ENCODE measurements at regions of chr3 and their contacts with region 1.

Region 1: GRCh38 chr3:170357176-170357919 is at the start of gene SKIL:
- DNase-seq: peak; percentile 94
- ATAC-seq: peak; percentile 76
- H3K4me3 ChIP-seq: peak within 1 kb of the TSS; percentile 85
- H3K27ac ChIP-seq: peak within 1 kb of the TSS; percentile 65
- H3K4me1 ChIP-seq: peaks cover 38% of the 10 kb centered on the region
- H3K27me3 ChIP-seq: no peaks in the 10 kb centered on the region
- CTCF ChIP-seq: no peak
- total RNA-seq, gene SKIL: 15.6 and 35.0 TPM in 2 replicates

Region 2: DNA sequence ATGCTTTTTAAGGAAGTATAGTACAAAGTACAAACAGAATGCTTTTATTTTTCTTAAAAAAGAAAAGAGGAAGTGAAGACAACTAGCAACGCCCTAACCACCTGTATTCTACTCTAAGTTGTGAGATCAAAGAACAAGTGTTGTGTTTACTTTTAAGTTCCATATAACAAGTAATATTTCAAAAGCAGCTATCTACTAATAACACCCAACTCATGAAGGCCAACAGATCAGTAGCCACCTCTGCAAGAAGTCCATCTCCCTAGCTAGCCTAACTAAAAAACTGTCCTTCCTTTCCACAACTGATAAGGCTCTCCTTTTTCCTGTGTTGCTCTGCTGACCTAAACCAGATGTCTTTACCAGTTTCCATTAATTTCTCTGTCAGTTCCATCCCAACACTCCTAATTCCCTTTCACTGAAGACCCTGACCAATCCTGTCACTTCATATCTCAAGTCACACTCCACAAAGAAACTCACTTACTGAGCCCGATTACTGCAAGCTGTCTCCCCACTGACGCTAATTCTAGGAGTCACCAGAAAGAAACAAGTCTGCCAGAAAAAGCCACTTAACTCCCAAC is 202.7 kb before region 1 on chr3:
- CTCF ChIA-PET with region 1: no interaction called
- POLR2A ChIA-PET with region 1: interaction called, 10 read pairs
- intact Hi-C with region 1: no loop called
- DNase-seq: no peak
- ATAC-seq: peak; percentile 15
- H3K4me3 ChIP-seq: no peak overlapping the region
- H3K27ac ChIP-seq: no peak overlapping the region
- H3K4me1 ChIP-seq: 0 out of 2 replicates have a peak, but pooled peaks cover 5% of the 10 kb centered on the region
- H3K27me3 ChIP-seq: no peaks in the 10 kb centered on the region
- CTCF ChIP-seq: no peak

Region 3: GRCh38 chr3:170189398-170190256 is 167.7 kb before region 1 on chr3:
- CTCF ChIA-PET with region 1: interaction called, 4 read pairs
- POLR2A ChIA-PET with region 1: no interaction called
- intact Hi-C with region 1: loop called (anchors 2 kb)
- DNase-seq: no peak
- ATAC-seq: peak; percentile 29
- H3K4me3 ChIP-seq: no peak overlapping the region; the same call in 1 of the 2 replicates
- H3K27ac ChIP-seq: no peak overlapping the region
- H3K4me1 ChIP-seq: no peaks in the 10 kb centered on the region
- H3K27me3 ChIP-seq: no peaks in the 10 kb centered on the region
- CTCF ChIP-seq: no peak; the same call in 1 of the 2 replicates

Region 4: GRCh38 chr3:170307671-170308403 is 49.5 kb before region 1 on chr3:
- CTCF ChIA-PET with region 1: no interaction called
- POLR2A ChIA-PET with region 1: no interaction called
- intact Hi-C with region 1: loop called (anchors 1 kb)
- DNase-seq: peak; percentile 92
- ATAC-seq: peak; percentile 80
- H3K4me3 ChIP-seq: no peak overlapping the region
- H3K27ac ChIP-seq: peak overlapping the region; percentile 10; the same call in 1 of the 2 replicates
- H3K4me1 ChIP-seq: peaks cover 12% of the 10 kb centered on the region
- H3K27me3 ChIP-seq: no peaks in the 10 kb centered on the region
- CTCF ChIP-seq: no peak

Region 5: GRCh38 chr3:170330366-170330765 is 27.0 kb before region 1 on chr3:
- CTCF ChIA-PET with region 1: no interaction called
- POLR2A ChIA-PET with region 1: interaction called, 7 read pairs
- intact Hi-C with region 1: loop called (anchors 1 kb)
- DNase-seq: peak; percentile 97
- ATAC-seq: peak; percentile 96
- H3K4me3 ChIP-seq: no peak overlapping the region
- H3K27ac ChIP-seq: peak overlapping the region; percentile 24; the same call in 1 of the 2 replicates
- H3K4me1 ChIP-seq: peaks cover 17% of the 10 kb centered on the region
- H3K27me3 ChIP-seq: no peaks in the 10 kb centered on the region
- CTCF ChIP-seq: no peak

Region 6: DNA sequence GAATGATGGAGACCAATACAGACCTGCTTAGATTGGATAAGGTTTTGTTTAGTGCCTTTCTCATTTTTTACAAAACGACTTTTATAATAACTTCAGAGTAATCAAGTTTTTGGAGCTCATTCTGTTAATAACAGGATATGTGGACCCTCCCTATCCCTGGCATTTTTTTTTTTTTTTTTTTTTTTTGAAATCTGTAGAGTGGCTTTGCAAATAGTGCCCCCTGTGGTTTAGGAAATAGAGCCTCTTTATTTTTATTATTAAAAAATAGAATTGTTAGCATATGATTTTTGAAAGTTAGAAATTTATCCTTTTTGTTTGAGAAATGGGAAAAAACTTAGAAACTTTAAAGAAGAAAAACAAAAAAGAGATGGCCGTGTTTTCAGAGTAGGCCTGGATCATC is 11.6 kb after region 1 on chr3:
- CTCF ChIA-PET with region 1: interaction called, 16 read pairs
- POLR2A ChIA-PET with region 1: no interaction called
- intact Hi-C with region 1: no loop called
- DNase-seq: peak; percentile 30
- ATAC-seq: no peak
- H3K4me3 ChIP-seq: no peak overlapping the region
- H3K27ac ChIP-seq: no peak overlapping the region
- H3K4me1 ChIP-seq: peaks cover 12% of the 10 kb centered on the region
- H3K27me3 ChIP-seq: no peaks in the 10 kb centered on the region
- CTCF ChIP-seq: no peak; the same call in 1 of the 2 replicates

Region 7: DNA sequence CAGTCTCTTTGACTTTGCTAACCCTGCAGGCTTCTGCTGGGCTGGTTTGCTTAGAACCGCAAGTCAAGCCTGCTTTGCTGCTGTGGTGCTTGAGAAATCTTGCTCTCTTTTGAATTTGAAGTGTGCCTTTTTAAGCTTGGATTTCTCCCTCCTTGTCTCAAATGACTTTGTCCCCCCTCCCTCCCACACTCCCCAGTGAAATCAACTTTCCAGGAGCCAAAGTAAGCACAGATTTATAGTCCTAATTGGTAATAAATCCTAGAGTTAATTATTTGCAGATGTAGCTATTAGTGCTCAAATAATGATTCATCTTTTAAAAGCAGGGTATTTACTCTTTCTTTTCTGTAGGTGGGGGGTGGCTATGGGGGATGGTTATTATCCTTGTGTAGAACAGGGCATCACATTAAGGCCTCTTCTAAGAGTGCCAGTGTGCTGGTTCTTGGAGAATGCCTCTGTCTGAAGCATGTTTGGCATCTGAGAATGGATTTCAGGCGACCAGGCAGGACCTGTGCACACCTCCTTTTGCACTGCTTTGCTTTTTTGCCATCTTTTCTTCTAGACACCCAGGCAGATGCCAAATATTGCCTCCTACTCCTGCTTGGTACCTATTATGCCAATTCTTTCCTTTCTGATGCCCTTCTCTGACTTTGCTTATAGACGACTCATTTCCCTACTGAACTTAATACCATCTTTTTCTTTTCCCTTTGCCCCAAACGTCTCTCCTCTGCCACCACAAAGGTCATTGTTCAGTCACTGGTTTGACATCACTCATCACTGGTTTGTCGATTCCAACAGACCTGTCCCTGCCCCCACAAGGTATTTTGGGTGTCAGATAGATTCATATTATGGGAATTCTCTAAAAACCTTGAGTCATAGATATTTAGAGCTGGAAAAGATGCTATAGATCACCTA is 112.1 kb after region 1 on chr3:
- CTCF ChIA-PET with region 1: no interaction called
- POLR2A ChIA-PET with region 1: interaction called, 20 read pairs
- intact Hi-C with region 1: no loop called
- DNase-seq: peak; percentile 68
- ATAC-seq: peak; percentile 72
- H3K4me3 ChIP-seq: no peak overlapping the region; the same call in 1 of the 2 replicates
- H3K27ac ChIP-seq: peak overlapping the region; percentile 21
- H3K4me1 ChIP-seq: peaks cover 56% of the 10 kb centered on the region
- H3K27me3 ChIP-seq: no peaks in the 10 kb centered on the region
- CTCF ChIP-seq: no peak